ENCODE measurements at regions of chr16 and their contacts with region 1.

Region 1: GRCh38 chr16:20300312-20301097 is 26.8 kb downstream of the GP2 start:
- DNase-seq: peak; percentile 45 to 61
- H3K4me3 ChIP-seq: no peak overlapping the region
- H3K4me3 Mint-ChIP-seq: no peak overlapping the region
- H3K27ac Mint-ChIP-seq: no peak overlapping the region
- H3K4me1 ChIP-seq: no peaks in the 10 kb centered on the region
- H3K4me1 Mint-ChIP-seq: no peaks in the 10 kb centered on the region
- H3K27me3 ChIP-seq: no peaks in the 10 kb centered on the region
- H3K27me3 Mint-ChIP-seq: peaks cover 21% of the 10 kb centered on the region
- CTCF ChIP-seq: peak; percentile 70 to 79

Region 2: GRCh38 chr16:19898924-19899604 is 401.4 kb before region 1 on chr16:
- CTCF ChIA-PET with region 1: interaction called, 10 read pairs
- POLR2A ChIA-PET with region 1: no interaction called
- intact Hi-C with region 1: loop called (anchors 2 kb)
- DNase-seq: peak; percentile 57 to 70
- H3K4me3 ChIP-seq: no peak overlapping the region
- H3K4me3 Mint-ChIP-seq: no peak overlapping the region
- H3K27ac Mint-ChIP-seq: no peak overlapping the region
- H3K4me1 ChIP-seq: no peaks in the 10 kb centered on the region
- H3K4me1 Mint-ChIP-seq: peaks cover 7% of the 10 kb centered on the region
- H3K27me3 ChIP-seq: no peaks in the 10 kb centered on the region
- H3K27me3 Mint-ChIP-seq: peaks cover 9% of the 10 kb centered on the region
- CTCF ChIP-seq: peak; percentile 60 to 75

Region 3: GRCh38 chr16:20181421-20181820 is 119.1 kb before region 1 on chr16:
- CTCF ChIA-PET with region 1: no interaction called
- POLR2A ChIA-PET with region 1: no interaction called
- intact Hi-C with region 1: no loop called
- DNase-seq: no peak
- H3K4me3 ChIP-seq: no peak overlapping the region
- H3K4me3 Mint-ChIP-seq: no peak overlapping the region
- H3K27ac Mint-ChIP-seq: no peak overlapping the region
- H3K4me1 ChIP-seq: no peaks in the 10 kb centered on the region
- H3K4me1 Mint-ChIP-seq: no peaks in the 10 kb centered on the region
- H3K27me3 ChIP-seq: no peaks in the 10 kb centered on the region
- H3K27me3 Mint-ChIP-seq: peaks cover 11% of the 10 kb centered on the region
- CTCF ChIP-seq: no peak

Measured in Caco-2 (cell line).